ENCODE measurements at regions of chr6 and their contacts with region 1.

Region 1: DNA sequence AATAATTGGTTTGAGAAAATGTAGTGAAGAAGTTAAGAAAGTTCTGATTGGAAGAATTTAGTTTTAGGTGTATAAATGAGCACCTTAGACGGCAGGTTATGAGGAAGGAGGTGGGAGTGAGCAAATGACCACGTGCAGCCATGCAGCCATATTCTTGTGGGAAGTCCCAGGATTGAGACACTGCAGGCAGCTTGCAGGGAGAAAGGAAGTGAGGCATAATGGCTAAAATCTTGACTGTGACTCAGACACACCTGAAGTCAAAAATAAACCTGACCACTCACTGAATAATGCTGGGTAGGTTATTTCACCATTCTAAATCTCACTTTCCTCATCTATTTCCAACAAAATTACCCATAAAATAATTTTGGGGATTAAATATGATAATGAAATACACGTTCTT is 16.6 kb downstream of the DSE start:
- DNase-seq: peak; percentile 16
- ATAC-seq: peak; percentile 65
- H3K4me3 Mint-ChIP-seq: no peak overlapping the region
- H3K27ac Mint-ChIP-seq: no peak overlapping the region
- H3K4me1 Mint-ChIP-seq: peaks cover 19% of the 10 kb centered on the region
- H3K27me3 Mint-ChIP-seq: no peaks in the 10 kb centered on the region

Region 2: DNA sequence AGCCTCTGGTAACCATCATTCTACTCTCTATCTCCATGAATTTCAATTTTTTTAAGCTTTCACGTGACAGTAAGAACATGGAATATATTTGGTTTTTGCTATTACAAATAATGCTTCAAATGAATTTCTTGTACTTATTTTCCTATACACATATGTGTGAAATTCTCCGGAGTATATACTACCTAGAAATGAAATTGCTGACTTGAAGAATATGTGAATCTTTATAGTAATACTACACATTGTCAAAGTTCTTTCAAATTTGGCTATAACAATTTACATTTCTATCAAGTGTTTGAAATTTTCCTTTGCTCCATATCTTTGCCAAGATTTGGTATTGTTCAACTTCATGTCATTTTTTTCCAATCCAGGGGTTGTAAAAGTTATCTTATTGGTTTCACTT is 866.4 kb after region 1 on chr6:
- CTCF ChIA-PET with region 1: no interaction called
- POLR2A ChIA-PET with region 1: no interaction called
- intact Hi-C with region 1: loop called in 1 of 2 experiments (anchors 10 kb)
- DNase-seq: no peak
- ATAC-seq: no peak
- H3K4me3 Mint-ChIP-seq: no peak overlapping the region
- H3K27ac Mint-ChIP-seq: no peak overlapping the region
- H3K4me1 Mint-ChIP-seq: no peaks in the 10 kb centered on the region
- H3K27me3 Mint-ChIP-seq: peaks cover 3% of the 10 kb centered on the region

Measured in activated CD4-positive, alpha-beta T cell treated with anti-CD3 and anti-CD28 coated beads for 36 hours (primary cell).